ENCODE measurements at regions of chr3 and their contacts with region 1.

Region 1: GRCh38 chr3:128634075-128634611 is 16.5 kb downstream of the RPN1 start:
- DNase-seq: no peak
- H3K27ac ChIP-seq: 0 out of 2 replicates have a peak overlapping the region, but pooled peaks have one; percentile 1
- CTCF ChIP-seq: no peak

Region 2: DNA sequence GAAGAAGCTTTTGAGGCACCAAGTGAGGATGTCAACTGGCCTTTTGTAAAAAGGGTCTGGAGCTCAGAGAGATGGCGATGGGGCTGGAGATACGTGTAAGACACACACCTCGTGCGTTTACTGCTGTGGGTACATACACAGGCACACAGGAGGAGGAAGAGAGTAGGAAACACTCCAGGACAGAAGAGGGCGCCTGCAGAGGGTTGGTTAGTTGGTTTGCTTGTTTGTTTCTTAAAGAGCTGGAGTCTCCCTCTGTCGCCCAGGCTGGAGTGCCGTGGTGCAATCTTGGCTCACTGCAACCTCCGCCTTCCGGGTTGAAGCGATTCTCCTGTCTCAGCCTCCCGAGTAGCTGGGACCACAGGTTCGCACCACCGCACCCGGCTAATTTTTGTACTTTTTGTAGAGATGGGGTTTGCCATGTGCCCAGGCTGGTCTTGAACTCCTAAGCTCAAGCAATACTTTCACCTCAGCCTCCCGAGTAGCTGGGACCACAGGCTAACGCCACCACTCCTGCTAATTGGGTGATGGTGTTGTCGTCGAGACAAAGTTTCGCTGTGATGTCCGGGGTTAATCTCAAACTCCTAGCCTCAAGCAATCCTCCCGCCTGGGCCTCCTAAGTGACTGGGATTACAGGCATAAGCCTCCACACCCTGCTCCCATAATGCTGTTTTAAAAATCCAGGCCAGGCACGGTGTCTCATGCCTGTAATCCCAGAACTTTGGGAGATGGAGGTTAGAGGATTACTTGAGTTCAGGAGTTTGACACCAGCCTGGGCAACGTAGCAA is 1345.0 kb before region 1 on chr3:
- CTCF ChIA-PET with region 1: no interaction called
- POLR2A ChIA-PET with region 1: no interaction called
- DNase-seq: no peak
- H3K27ac ChIP-seq: no peak overlapping the region
- CTCF ChIP-seq: no peak

Region 3: GRCh38 chr3:128487813-128488635 is 146.1 kb before region 1 on chr3:
- CTCF ChIA-PET with region 1: no interaction called
- POLR2A ChIA-PET with region 1: no interaction called
- DNase-seq: peak; percentile 93
- H3K27ac ChIP-seq: peak overlapping the region; percentile 62
- CTCF ChIP-seq: no peak

Region 4: GRCh38 chr3:128617557-128618397 is 16.4 kb before region 1 on chr3:
- CTCF ChIA-PET with region 1: interaction called, 12 read pairs
- POLR2A ChIA-PET with region 1: no interaction called
- DNase-seq: peak; percentile 99
- H3K27ac ChIP-seq: peak overlapping the region; percentile 84
- CTCF ChIP-seq: peak; percentile 98